A549 (cell line): ENCODE measurements at regions of chr3 and their contacts with region 1.

Region 1: GRCh38 chr3:25441234-25441856 is 13.3 kb downstream of the RARB start:
- DNase-seq: no peak
- ATAC-seq: 0 out of 6 replicates have a peak, but pooled peaks of 1 of the 2 experiments have one; percentile 22
- H3K4me3 ChIP-seq: no peak overlapping the region
- H3K27ac ChIP-seq: no peak overlapping the region
- H3K4me1 ChIP-seq: peaks cover 48% of the 10 kb centered on the region
- CTCF ChIP-seq: peak; percentile 73
- EP300 ChIP-seq: no peak
- POLR2A ChIP-seq: no peak
- RAD21 ChIP-seq: peak; percentile 13 to 19; a peak in 1 of 5 replicates

Region 2: GRCh38 chr3:25080461-25080860 is 360.9 kb before region 1 on chr3:
- CTCF ChIA-PET with region 1: no interaction called
- POLR2A ChIA-PET with region 1: no interaction called
- DNase-seq: no peak
- ATAC-seq: no peak
- H3K4me3 ChIP-seq: no peak overlapping the region
- H3K27ac ChIP-seq: no peak overlapping the region
- H3K4me1 ChIP-seq: no peaks in the 10 kb centered on the region
- CTCF ChIP-seq: no peak
- EP300 ChIP-seq: no peak
- POLR2A ChIP-seq: no peak
- RAD21 ChIP-seq: no peak

Region 3: GRCh38 chr3:25338152-25338725 is 103.1 kb before region 1 on chr3:
- CTCF ChIA-PET with region 1: no interaction called
- POLR2A ChIA-PET with region 1: no interaction called
- DNase-seq: no peak
- ATAC-seq: no peak
- H3K4me3 ChIP-seq: no peak overlapping the region
- H3K27ac ChIP-seq: no peak overlapping the region
- H3K4me1 ChIP-seq: no peaks in the 10 kb centered on the region
- CTCF ChIP-seq: no peak
- EP300 ChIP-seq: no peak
- POLR2A ChIP-seq: no peak
- RAD21 ChIP-seq: no peak

Region 4: DNA sequence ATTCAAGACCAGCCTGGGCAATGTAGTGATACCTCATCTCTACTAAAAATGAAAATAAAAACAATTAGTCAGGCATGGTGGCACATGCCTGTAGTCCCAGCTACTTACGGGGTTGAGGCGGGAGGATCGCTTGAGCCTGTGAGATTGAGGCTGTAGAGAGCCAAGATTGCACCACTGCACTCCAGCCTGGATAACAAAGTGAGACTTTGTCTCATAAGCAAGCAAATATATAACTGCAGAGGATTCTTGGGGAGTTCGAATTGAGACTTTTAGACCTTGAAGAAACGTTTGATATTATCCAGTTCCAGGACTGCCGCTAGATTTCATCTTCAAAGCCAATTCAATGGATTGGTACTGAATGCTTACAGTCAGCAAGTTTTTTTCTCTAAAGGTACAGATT is 25.2 kb before region 1 on chr3:
- CTCF ChIA-PET with region 1: no interaction called
- POLR2A ChIA-PET with region 1: no interaction called
- DNase-seq: no peak
- ATAC-seq: no peak
- H3K4me3 ChIP-seq: no peak overlapping the region
- H3K27ac ChIP-seq: no peak overlapping the region
- H3K4me1 ChIP-seq: peaks cover 27% of the 10 kb centered on the region
- CTCF ChIP-seq: no peak
- EP300 ChIP-seq: no peak
- POLR2A ChIP-seq: no peak
- RAD21 ChIP-seq: no peak

Region 5: DNA sequence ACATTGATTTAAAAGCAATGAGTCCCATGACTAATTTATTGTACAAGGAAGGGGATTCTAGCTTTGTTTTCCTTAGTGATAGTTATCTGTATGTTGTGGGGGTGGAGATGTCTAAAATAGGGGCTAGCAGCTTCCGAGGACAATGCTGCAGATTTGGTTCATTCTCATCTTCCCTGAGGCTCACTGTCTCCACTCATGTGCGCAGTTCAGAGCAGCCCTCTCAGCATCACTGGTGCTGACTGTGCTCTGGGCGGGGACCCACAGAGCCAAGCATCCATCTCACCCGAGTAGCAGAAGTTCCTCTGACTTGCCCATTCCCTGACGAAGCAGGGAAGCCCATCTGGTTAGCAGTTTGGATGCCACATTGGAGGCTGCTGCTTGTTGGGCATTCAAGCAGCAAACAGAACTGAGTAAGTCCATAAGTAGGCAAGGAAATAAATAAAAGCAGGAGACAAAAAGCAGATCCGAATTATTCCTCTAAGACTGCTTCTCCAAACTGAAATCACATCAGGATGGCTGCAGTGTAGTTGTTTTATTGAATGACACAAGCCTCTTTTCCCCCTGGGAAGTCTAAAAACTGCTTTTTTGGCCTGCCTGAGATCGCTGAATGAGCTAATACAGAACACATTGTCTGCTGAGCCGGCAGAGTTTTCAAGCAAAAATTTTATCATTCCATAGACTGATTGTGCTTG is 14.2 kb after region 1 on chr3:
- CTCF ChIA-PET with region 1: interaction called, 20 read pairs
- POLR2A ChIA-PET with region 1: no interaction called
- DNase-seq: no peak
- ATAC-seq: peak; percentile 84 to 86
- H3K4me3 ChIP-seq: no peak overlapping the region
- H3K27ac ChIP-seq: peak overlapping the region; percentile 37 to 65
- H3K4me1 ChIP-seq: peaks cover 67% of the 10 kb centered on the region
- CTCF ChIP-seq: no peak
- EP300 ChIP-seq: no peak
- POLR2A ChIP-seq: no peak
- RAD21 ChIP-seq: no peak

Region 6: GRCh38 chr3:25515171-25515570 is 73.8 kb after region 1 on chr3:
- CTCF ChIA-PET with region 1: no interaction called
- POLR2A ChIA-PET with region 1: no interaction called
- DNase-seq: no peak
- ATAC-seq: no peak
- H3K4me3 ChIP-seq: no peak overlapping the region
- H3K27ac ChIP-seq: no peak overlapping the region
- H3K4me1 ChIP-seq: no peaks in the 10 kb centered on the region
- CTCF ChIP-seq: no peak
- EP300 ChIP-seq: no peak
- POLR2A ChIP-seq: no peak
- RAD21 ChIP-seq: no peak